ENCODE measurements at regions of chr6 and their contacts with region 1.

Region 1: DNA sequence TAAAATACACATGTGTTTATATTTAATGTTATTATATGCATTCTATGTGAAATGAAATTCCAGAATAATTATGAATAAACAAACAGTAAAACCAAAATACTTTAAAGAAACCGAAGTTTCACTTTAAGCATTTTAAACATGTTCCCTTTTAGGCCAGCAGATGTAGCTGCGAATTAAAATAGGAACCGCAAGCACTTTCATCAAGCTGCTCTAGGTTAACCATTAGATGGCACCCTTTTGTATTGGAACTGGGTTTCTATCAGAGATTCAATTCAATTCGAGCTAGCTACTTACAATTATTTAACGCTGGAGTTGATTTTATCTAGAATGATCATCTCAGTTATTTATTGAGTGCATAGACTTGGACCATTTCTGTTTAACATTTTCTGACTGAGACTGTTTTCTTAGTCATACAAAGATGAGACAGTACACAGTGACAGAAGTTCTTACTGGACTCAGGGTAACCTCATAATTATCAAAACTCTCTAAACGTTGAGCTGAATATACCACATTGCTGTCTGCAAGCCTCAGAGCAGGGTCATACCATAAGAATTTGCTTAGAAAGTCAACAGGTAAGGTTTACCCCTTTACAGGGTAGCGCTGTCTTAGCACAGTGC is 8.5 kb downstream of the TMEM242 start:
- DNase-seq: peak; percentile 85
- ATAC-seq: peak; percentile 88
- H3K4me3 ChIP-seq: no peak overlapping the region
- H3K27ac ChIP-seq: no peak overlapping the region
- H3K4me1 ChIP-seq: peaks cover 3% of the 10 kb centered on the region; the same call in 1 of the 2 replicates
- H3K27me3 ChIP-seq: no peaks in the 10 kb centered on the region
- CTCF ChIP-seq: peak; percentile 99
- POLR2A ChIP-seq: no peak
- RAD21 ChIP-seq: peak; percentile 88

Region 2: GRCh38 chr6:157571269-157571668 is 256.5 kb after region 1 on chr6:
- CTCF ChIA-PET with region 1: no interaction called
- POLR2A ChIA-PET with region 1: no interaction called
- dilution Hi-C with region 1: no loop called
- in situ Hi-C with region 1: no loop called
- intact Hi-C with region 1: no loop called
- DNase-seq: no peak
- ATAC-seq: no peak
- H3K4me3 ChIP-seq: no peak overlapping the region
- H3K27ac ChIP-seq: no peak overlapping the region
- H3K4me1 ChIP-seq: no peaks in the 10 kb centered on the region
- H3K27me3 ChIP-seq: no peaks in the 10 kb centered on the region
- CTCF ChIP-seq: no peak
- POLR2A ChIP-seq: no peak
- RAD21 ChIP-seq: no peak

Region 3: GRCh38 chr6:157597446-157598312 is 282.9 kb after region 1 on chr6:
- CTCF ChIA-PET with region 1: interaction called, 3 read pairs
- POLR2A ChIA-PET with region 1: no interaction called
- dilution Hi-C with region 1: no loop called
- in situ Hi-C with region 1: no loop called
- intact Hi-C with region 1: loop called (anchors 1 kb)
- DNase-seq: no peak
- ATAC-seq: peak; percentile 74
- H3K4me3 ChIP-seq: no peak overlapping the region
- H3K27ac ChIP-seq: peak overlapping the region; percentile 81; the same call in 1 of the 2 replicates
- H3K4me1 ChIP-seq: peaks cover 12% of the 10 kb centered on the region
- H3K27me3 ChIP-seq: no peaks in the 10 kb centered on the region
- CTCF ChIP-seq: peak; percentile 53
- POLR2A ChIP-seq: no peak
- RAD21 ChIP-seq: peak; percentile 59

Region 4: DNA sequence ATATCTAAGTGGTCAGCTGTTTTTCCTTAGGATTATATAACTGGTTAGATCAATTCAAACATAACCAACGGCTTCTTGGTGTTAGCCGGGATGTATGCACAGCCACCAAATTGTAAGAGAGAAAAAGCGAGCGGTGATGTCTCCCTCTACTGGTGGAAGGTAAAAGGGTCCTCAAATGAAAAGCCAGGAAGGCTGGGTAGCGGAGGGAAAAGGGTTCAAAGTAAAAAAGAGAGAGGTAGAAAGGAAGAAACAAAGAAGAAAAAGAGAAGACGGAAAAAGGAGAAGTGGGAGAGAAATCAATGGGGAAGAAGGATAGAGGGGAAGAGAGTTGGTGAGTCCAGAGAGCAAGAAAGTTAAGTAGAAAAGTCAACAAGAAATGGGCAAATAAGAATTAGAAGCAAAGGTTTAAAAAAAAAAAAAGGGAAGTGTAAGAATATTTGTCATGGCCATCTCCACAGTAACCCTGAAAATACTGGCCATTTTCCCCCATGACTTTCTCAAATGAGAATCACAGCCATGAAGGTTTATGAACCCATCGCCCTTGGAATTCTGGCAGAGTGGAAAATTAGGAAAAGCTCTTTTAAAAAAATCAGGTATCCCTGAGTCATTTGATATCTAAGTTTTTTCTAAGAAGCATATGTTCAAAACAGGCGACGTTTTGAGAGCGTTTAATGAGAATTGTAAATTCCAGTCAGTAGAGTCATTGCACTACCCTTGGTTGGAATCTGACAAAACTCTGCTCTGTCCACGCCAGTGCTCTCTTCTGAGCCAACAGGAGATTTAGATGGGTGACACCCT is 352.6 kb after region 1 on chr6:
- CTCF ChIA-PET with region 1: interaction called, 15 read pairs
- POLR2A ChIA-PET with region 1: no interaction called
- dilution Hi-C with region 1: no loop called
- in situ Hi-C with region 1: loop called (anchors 5 kb)
- intact Hi-C with region 1: loop called (anchors 1 kb)
- DNase-seq: peak; percentile 70
- ATAC-seq: peak; percentile 45
- H3K4me3 ChIP-seq: no peak overlapping the region
- H3K27ac ChIP-seq: no peak overlapping the region
- H3K4me1 ChIP-seq: peaks cover 10% of the 10 kb centered on the region; the same call in 1 of the 2 replicates
- H3K27me3 ChIP-seq: no peaks in the 10 kb centered on the region
- CTCF ChIP-seq: peak; percentile 84
- POLR2A ChIP-seq: no peak
- RAD21 ChIP-seq: peak; percentile 86

Region 5: DNA sequence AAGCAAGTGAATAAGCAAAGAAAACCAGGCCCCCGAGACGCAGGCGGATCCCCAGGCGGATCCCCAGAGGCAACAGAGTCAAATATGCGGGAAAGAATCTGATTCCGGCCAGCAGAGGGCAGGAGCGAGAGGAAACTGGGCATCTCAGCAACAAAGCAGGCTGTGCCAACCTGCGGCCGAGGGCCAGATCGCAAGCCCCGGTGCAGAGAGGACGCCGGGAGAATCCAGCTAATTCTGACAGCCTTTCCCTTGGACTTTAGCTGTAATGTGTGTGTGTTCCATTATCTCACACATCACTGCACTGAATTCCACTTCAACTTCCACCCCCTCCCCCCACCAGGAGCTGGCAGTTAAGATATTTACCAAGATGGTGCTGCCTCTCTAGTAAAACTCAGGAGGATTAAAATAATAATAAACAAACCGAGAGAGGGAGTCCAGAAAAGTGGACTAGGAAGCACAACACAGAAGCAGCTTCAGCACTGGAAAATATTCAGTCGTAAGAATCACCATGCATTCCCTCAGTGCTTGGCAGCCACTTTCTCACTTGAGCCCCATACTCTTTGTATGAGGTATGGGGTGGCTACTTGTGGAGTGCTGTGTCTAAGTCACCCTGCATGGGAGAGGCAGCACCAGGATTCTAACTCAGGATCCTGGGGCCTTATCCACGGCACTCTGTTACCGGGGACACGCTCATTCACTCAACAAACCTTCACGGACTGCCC is 442.1 kb after region 1 on chr6:
- CTCF ChIA-PET with region 1: no interaction called
- POLR2A ChIA-PET with region 1: no interaction called
- dilution Hi-C with region 1: no loop called
- in situ Hi-C with region 1: no loop called
- intact Hi-C with region 1: loop called (anchors 2 kb)
- DNase-seq: peak; percentile 73
- ATAC-seq: peak; percentile 83
- H3K4me3 ChIP-seq: no peak overlapping the region
- H3K27ac ChIP-seq: peak overlapping the region; percentile 40; the same call in 1 of the 2 replicates
- H3K4me1 ChIP-seq: peaks cover 18% of the 10 kb centered on the region
- H3K27me3 ChIP-seq: no peaks in the 10 kb centered on the region; the same call in 1 of the 2 replicates
- CTCF ChIP-seq: peak; percentile 92
- POLR2A ChIP-seq: no peak
- RAD21 ChIP-seq: peak; percentile 92

Region 6: DNA sequence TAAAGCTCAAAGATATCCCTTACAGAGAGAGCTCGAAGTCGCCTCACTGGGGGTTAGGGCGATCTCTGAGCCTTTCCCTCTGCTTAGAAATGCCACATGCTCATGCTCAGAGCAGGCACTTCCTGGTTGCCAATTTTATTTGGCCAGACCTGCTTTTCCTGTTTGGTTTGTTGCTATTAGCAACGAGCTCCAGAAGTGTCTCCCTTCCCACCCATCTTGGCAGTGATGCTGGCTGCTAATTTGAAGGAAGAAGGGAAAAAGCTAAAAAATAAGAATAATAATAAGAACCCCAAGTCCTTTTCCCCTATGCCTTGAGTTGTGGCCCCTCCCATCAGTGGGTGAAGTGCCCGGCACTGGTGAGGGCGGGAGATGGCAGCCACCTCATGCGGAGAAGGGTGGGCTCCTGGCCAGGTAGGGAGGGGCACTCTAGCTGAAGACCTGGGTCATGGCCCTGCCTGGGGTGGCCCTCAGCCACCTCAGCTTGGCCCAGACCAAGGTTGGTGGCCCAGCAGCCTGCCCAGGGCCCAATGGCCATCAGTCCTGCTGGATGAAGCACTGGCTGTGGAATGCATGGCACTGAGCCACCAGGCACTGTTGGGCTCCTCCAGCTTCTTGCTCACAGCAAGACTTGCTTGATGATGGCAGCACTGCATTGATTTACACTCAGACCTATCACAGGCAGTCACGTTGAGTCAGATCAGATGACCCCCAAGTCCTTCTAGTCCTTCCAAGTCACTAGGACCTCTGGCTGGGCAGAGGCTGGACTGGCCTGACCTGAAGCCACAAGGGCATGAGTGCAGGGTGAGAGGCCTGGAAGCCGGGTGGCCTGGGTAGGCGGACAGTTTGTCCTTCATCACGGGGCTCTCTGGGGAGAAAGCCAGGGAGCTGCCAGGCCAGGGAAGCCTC is 745.9 kb after region 1 on chr6:
- CTCF ChIA-PET with region 1: no interaction called
- POLR2A ChIA-PET with region 1: no interaction called
- dilution Hi-C with region 1: no loop called
- in situ Hi-C with region 1: no loop called
- intact Hi-C with region 1: loop called (anchors 10 kb)
- DNase-seq: peak; percentile 94
- ATAC-seq: peak; percentile 79
- H3K4me3 ChIP-seq: no peak overlapping the region
- H3K27ac ChIP-seq: peak overlapping the region; percentile 74
- H3K4me1 ChIP-seq: peaks cover 35% of the 10 kb centered on the region
- H3K27me3 ChIP-seq: no peaks in the 10 kb centered on the region
- CTCF ChIP-seq: no peak
- POLR2A ChIP-seq: 0 out of 2 replicates have a peak, but pooled peaks have one; percentile 66
- RAD21 ChIP-seq: peak; percentile 15; the same call in 1 of the 2 replicates

Region 7: GRCh38 chr6:158072083-158072721 is 757.4 kb after region 1 on chr6:
- CTCF ChIA-PET with region 1: no interaction called
- POLR2A ChIA-PET with region 1: no interaction called
- dilution Hi-C with region 1: no loop called
- in situ Hi-C with region 1: loop called (anchors 10 kb)
- intact Hi-C with region 1: loop called (anchors 10 kb)
- DNase-seq: peak; percentile 76
- ATAC-seq: peak; percentile 76
- H3K4me3 ChIP-seq: no peak overlapping the region
- H3K27ac ChIP-seq: peak overlapping the region; percentile 30; the same call in 1 of the 2 replicates
- H3K4me1 ChIP-seq: peaks cover 17% of the 10 kb centered on the region
- H3K27me3 ChIP-seq: no peaks in the 10 kb centered on the region
- CTCF ChIP-seq: peak; percentile 84
- POLR2A ChIP-seq: peak; percentile 47; the same call in 1 of the 2 replicates
- RAD21 ChIP-seq: peak; percentile 95

Region 8: DNA sequence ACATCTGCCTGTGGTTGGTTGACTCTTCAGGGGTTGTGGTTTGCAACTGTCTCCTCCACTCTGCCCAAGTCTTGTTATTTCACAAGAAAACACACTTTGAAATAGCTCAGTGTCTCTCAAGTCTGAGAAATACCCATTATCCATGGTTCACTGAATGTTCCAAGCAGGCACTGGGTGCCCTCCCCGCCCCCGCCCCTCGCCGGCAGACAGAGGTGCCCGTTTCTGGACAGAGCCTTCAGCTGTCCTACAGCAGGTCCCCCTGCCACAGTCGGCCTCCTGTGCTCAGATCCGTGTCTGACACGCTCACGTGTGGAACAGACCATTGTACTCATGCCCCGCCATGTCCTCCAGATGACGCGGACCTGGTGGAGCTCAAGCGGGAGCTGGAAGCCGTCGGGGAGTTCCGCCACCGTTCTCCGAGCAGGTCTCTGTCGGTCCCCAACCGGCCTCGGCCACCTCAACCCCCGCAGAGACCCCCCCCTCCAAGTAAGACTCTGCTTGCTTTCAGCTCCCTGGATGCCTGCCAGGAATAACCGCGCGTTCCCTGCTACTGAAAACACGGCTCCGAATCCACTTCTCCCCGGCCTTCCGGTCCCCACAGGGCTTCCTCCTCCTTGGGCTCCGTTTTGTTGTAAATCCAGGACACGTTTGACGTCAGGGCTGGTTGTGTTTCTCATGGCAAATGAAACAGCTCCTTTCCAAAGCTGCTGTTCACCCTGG is 771.9 kb after region 1 on chr6:
- CTCF ChIA-PET with region 1: no interaction called
- POLR2A ChIA-PET with region 1: no interaction called
- dilution Hi-C with region 1: no loop called
- in situ Hi-C with region 1: no loop called
- intact Hi-C with region 1: no loop called
- DNase-seq: peak; percentile 64
- ATAC-seq: peak; percentile 67; the same call in 1 of the 2 replicates
- H3K4me3 ChIP-seq: no peak overlapping the region
- H3K27ac ChIP-seq: no peak overlapping the region
- H3K4me1 ChIP-seq: peaks cover 8% of the 10 kb centered on the region
- H3K27me3 ChIP-seq: no peaks in the 10 kb centered on the region
- CTCF ChIP-seq: no peak
- POLR2A ChIP-seq: no peak
- RAD21 ChIP-seq: no peak

Measured in IMR-90 (cell line).